Sigmoid colon (tissue), 7 donors: ENCODE measurements at regions of chr10 and their contacts with region 1.

Region 1: GRCh38 chr10:104353325-104354048 is at the start of gene CFAP58:
- DNase-seq: peak; percentile 94
- H3K4me3 ChIP-seq: peak within 1 kb of the TSS; percentile 13 to 45 (median 30)
- H3K27ac ChIP-seq: peak within 1 kb of the TSS in 1 of 4 donors; percentile 4
- H3K4me1 ChIP-seq: peaks cover 0 to 26% (median 17%) of the 10 kb centered on the region in 4 donors
- H3K27me3 ChIP-seq: no peaks in the 10 kb centered on the region
- CTCF ChIP-seq: peak; percentile 6 to 63 (median 38)
- EP300 ChIP-seq: no peak
- POLR2A ChIP-seq: no peak
- total RNA-seq, gene CFAP58: 0.36 to 1.1 (median 0.61) TPM

Region 2: DNA sequence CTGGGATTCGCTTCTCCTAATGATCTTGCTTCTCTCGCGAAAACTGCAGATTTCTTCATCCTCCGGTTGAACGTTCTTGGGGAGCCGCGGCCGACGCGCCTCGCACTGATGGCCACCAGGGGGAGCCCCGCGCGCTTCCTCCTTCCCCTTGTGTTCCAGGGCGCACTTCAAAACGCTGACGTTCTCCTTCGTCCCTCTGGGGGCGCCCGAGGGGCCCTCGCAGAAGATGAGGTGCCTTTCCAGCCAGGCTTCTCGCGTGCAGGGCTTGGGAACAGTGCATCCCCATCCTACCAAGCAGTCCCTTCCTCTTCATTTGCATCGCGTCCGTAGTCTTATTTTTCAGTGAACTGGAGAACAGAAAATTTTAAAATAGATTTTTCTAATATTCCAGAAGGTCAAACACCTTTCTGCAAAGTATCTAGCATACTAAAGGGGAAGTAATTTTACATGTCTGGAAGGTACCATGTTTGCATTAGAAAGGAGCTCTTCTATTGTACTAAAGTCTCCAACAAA is 62.0 kb before region 1 on chr10:
- intact Hi-C with region 1: loop called (anchors 1 kb)
- DNase-seq: peak; percentile 95
- H3K4me3 ChIP-seq: no peak overlapping the region
- H3K27ac ChIP-seq: no peak overlapping the region
- H3K4me1 ChIP-seq: peaks cover 0 to 7% (median 2%) of the 10 kb centered on the region in 4 donors
- H3K27me3 ChIP-seq: no peaks in the 10 kb centered on the region
- CTCF ChIP-seq: peak; percentile 98 to 99 (median 98)
- EP300 ChIP-seq: no peak
- POLR2A ChIP-seq: no peak

Region 3: DNA sequence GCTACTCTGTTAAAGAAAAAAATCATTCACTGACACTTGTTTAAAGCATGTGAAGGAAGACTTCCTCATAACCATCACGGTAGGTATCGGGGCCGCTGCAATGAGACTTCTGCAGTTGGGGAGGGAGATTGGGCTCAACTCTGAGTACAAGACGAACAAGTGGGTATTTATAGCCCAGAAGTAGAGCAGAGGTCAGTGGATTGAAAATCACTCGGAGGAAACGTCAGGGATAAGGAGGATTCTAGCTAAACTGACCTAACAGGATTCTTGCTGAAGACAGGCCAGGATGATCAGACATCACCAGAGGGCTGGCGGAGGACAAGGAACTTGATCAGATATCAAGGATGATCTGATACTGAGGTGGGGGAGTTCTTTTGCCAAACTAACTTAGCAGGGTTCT is 48.5 kb before region 1 on chr10:
- intact Hi-C with region 1: loop called (anchors 1 kb)
- DNase-seq: peak; percentile 60
- H3K4me3 ChIP-seq: no peak overlapping the region
- H3K27ac ChIP-seq: peak overlapping the region in 2 of 4 donors; percentile 3 to 92
- H3K4me1 ChIP-seq: peaks cover 0 to 27% (median 19%) of the 10 kb centered on the region in 4 donors
- H3K27me3 ChIP-seq: no peaks in the 10 kb centered on the region
- CTCF ChIP-seq: no peak
- EP300 ChIP-seq: no peak
- POLR2A ChIP-seq: no peak

Region 4: DNA sequence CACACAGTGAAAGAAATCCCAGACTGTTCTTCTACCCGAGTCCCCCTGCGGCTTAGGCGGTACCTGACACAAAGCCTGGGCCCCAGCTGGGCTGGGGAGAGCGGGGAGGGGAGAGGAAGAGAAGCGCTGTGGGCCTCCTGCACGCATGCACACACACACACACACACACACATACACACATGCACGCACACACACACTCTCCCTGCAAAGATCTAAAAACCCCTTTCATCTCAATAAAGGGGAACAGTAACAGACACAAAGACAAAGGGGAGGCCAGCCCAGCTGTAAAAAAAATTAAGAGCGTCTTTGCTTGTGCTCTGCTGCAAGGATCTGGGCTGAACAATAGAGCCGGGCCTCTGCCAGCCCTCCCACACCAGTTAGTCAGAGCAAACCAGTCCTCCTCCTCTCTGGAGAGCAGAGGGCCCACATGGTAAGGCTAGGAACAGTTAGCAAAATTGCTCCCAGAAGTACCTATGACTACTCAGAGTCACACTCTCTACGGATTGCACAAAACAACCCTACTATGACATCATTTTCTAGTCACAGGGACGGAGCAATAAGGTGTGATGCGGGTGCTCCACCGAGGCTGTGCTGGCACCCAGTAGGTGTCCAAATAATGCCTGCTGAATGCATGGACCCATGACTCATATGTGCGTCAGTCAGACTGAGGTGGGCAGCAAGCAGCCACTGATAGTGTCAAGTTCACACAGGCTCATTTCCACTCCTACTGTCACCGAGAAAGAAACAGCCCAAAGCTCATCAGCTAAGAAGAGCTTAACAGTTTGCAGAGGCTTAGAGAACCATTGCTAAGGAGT is 24.4 kb before region 1 on chr10:
- intact Hi-C with region 1: no loop called
- DNase-seq: peak; percentile 87
- H3K4me3 ChIP-seq: peak overlapping the region in 3 of 4 donors; percentile 4 to 20 (median 11)
- H3K27ac ChIP-seq: peak overlapping the region; percentile 78 to 99 (median 96)
- H3K4me1 ChIP-seq: peaks cover 0 to 100% (median 99%) of the 10 kb centered on the region in 4 donors
- H3K27me3 ChIP-seq: no peaks in the 10 kb centered on the region
- CTCF ChIP-seq: no peak
- EP300 ChIP-seq: peak in 1 of 4 donors; percentile 50
- POLR2A ChIP-seq: no peak

Region 5: GRCh38 chr10:104920476-104920875 is 567.0 kb after region 1 on chr10:
- intact Hi-C with region 1: no loop called
- DNase-seq: no peak
- H3K4me3 ChIP-seq: no peak overlapping the region
- H3K27ac ChIP-seq: no peak overlapping the region
- H3K4me1 ChIP-seq: no peaks in the 10 kb centered on the region
- H3K27me3 ChIP-seq: no peaks in the 10 kb centered on the region
- CTCF ChIP-seq: no peak
- EP300 ChIP-seq: no peak
- POLR2A ChIP-seq: no peak